ENCODE measurements at regions of chrX and their contacts with region 1.

Region 1: GRCh38 chrX:65723706-65724105 is 56.3 kb downstream of the MSN start:
- DNase-seq: peak; percentile 74
- ATAC-seq: peak; percentile 80
- H3K4me3 ChIP-seq: no peak overlapping the region
- H3K27ac ChIP-seq: peak overlapping the region; percentile 78
- H3K4me1 ChIP-seq: peaks cover 13% of the 10 kb centered on the region
- H3K27me3 ChIP-seq: no peaks in the 10 kb centered on the region
- CTCF ChIP-seq: no peak
- EP300 ChIP-seq: peak in 1 of 2 experiments; percentile 70; a peak in 2 of 4 replicates
- POLR2A ChIP-seq: no peak
- RAD21 ChIP-seq: no peak

Region 2: GRCh38 chrX:65667503-65668376 is 56.0 kb before region 1 on chrX and contains the start of gene MSN:
- CTCF ChIA-PET with region 1: interaction called, 6 read pairs
- POLR2A ChIA-PET with region 1: interaction called, 4 read pairs
- RAD21 ChIA-PET with region 1: interaction called, 34 read pairs
- SMC1A ChIA-PET with region 1: interaction called, 7 read pairs
- in situ Hi-C with region 1: no loop called
- intact Hi-C with region 1: loop called (anchors 2 kb)
- DNase-seq: no peak
- ATAC-seq: peak; percentile 84
- H3K4me3 ChIP-seq: peak within 1 kb of the TSS; percentile 90
- H3K27ac ChIP-seq: peak within 1 kb of the TSS; percentile 83
- H3K4me1 ChIP-seq: peaks cover 4% of the 10 kb centered on the region; the same call in 1 of the 2 replicates
- H3K27me3 ChIP-seq: no peaks in the 10 kb centered on the region
- CTCF ChIP-seq: peak; percentile 5 to 14 (median 14); a peak in 1 of 6 replicates
- EP300 ChIP-seq: no peak
- POLR2A ChIP-seq: peak; percentile 85
- RAD21 ChIP-seq: no peak
- polyA plus RNA-seq, gene MSN: 93.8 to 104 TPM

Region 3: DNA sequence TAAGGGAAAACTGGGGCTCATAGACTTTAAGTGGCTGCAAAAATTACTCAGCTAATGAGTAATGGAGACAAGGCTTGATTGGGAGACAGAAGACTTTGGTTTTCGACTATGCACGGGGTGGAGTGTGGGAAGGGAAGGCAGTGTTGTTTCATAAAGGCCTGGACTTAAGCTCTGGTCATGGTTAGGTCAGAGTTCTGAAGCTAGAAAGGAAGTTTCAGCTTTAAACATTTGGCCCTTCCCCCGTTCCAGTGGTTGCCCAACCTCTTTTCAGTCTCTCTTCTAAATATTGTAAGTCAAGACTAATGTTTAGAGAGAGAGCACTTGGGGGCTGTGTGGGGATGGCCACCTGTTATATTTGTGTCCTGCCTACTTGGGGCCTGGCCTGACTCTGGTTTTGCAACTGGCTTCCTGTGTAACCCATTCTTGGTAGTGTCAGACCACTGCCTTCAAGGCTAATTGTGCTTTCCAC is 35.3 kb before region 1 on chrX:
- CTCF ChIA-PET with region 1: interaction called, 10 read pairs
- POLR2A ChIA-PET with region 1: interaction called, 7 read pairs
- RAD21 ChIA-PET with region 1: interaction called, 119 read pairs
- SMC1A ChIA-PET with region 1: interaction called, 38 read pairs
- in situ Hi-C with region 1: no loop called
- intact Hi-C with region 1: no loop called
- DNase-seq: peak; percentile 74
- ATAC-seq: peak; percentile 88
- H3K4me3 ChIP-seq: no peak overlapping the region
- H3K27ac ChIP-seq: peak overlapping the region; percentile 77
- H3K4me1 ChIP-seq: peaks cover 53% of the 10 kb centered on the region
- H3K27me3 ChIP-seq: no peaks in the 10 kb centered on the region
- CTCF ChIP-seq: no peak
- EP300 ChIP-seq: no peak
- POLR2A ChIP-seq: no peak
- RAD21 ChIP-seq: peak; percentile 20; the same call in 1 of the 2 replicates

Region 4: GRCh38 chrX:65697915-65698796 is 25.6 kb before region 1 on chrX:
- CTCF ChIA-PET with region 1: interaction called, 25 read pairs
- POLR2A ChIA-PET with region 1: interaction called, 20 read pairs
- RAD21 ChIA-PET with region 1: interaction called, 119 read pairs
- SMC1A ChIA-PET with region 1: interaction called, 65 read pairs
- in situ Hi-C with region 1: no loop called
- intact Hi-C with region 1: loop called (anchors 1 kb)
- DNase-seq: peak; percentile 83
- ATAC-seq: peak; percentile 72
- H3K4me3 ChIP-seq: peak overlapping the region; percentile 10; the same call in 1 of the 2 replicates
- H3K27ac ChIP-seq: peak overlapping the region; percentile 87
- H3K4me1 ChIP-seq: peaks cover 59% of the 10 kb centered on the region
- H3K27me3 ChIP-seq: no peaks in the 10 kb centered on the region
- CTCF ChIP-seq: no peak
- EP300 ChIP-seq: peak; percentile 12 to 54; a peak in 1 of 4 replicates
- POLR2A ChIP-seq: peak; percentile 55; the same call in 1 of the 2 replicates
- RAD21 ChIP-seq: no peak

Region 5: DNA sequence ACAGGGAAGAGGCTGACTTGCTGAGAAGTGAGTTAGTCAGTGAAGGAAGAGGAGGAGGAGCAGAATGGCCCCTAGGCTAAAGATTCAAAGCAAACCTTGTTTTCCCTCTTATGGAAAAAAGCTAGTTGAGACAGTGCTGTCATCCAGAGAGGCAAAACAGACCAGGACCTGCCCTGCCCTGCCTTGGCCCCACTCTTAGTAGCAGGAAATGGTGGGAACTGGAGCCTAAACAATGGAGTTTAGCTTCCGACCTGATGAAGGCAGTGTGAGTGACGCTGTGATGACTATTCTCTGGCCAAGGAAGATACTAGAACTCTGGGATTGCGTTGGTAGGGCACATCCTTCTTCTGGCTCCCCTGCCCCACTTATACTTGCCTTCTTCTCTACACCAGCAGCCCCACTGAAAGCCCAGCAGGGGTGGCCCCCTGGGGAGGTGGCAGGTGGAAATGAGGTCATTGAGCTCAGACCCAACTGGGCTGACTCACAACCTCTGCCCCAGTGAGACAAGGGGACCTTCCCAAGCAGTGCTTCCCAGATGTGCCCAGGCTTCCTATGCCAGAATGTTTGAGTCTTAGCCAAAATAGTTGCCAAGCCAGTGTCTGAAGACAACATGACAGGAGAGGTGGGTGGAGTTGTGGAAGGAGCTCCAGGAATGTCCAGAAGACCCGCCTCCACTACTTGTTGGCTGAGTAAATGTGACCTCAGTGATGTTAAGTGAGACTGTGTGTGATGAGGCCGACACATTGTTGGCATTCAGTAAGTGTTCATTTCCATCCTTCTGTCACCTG is 17.5 kb before region 1 on chrX:
- CTCF ChIA-PET with region 1: interaction called, 7 read pairs
- POLR2A ChIA-PET with region 1: interaction called, 26 read pairs
- RAD21 ChIA-PET with region 1: interaction called, 119 read pairs
- SMC1A ChIA-PET with region 1: interaction called, 65 read pairs
- in situ Hi-C with region 1: no loop called
- intact Hi-C with region 1: no loop called
- DNase-seq: no peak
- ATAC-seq: peak; percentile 77
- H3K4me3 ChIP-seq: no peak overlapping the region
- H3K27ac ChIP-seq: peak overlapping the region; percentile 29
- H3K4me1 ChIP-seq: peaks cover 33% of the 10 kb centered on the region
- H3K27me3 ChIP-seq: no peaks in the 10 kb centered on the region
- CTCF ChIP-seq: no peak
- EP300 ChIP-seq: no peak
- POLR2A ChIP-seq: peak; percentile 34; the same call in 1 of the 2 replicates
- RAD21 ChIP-seq: no peak

Region 6: GRCh38 chrX:65750674-65751469 is 27.2 kb after region 1 on chrX:
- CTCF ChIA-PET with region 1: no interaction called
- POLR2A ChIA-PET with region 1: interaction called, 3 read pairs
- RAD21 ChIA-PET with region 1: interaction called, 14 read pairs
- SMC1A ChIA-PET with region 1: interaction called, 7 read pairs
- in situ Hi-C with region 1: no loop called
- intact Hi-C with region 1: no loop called
- DNase-seq: peak; percentile 65
- ATAC-seq: peak; percentile 85
- H3K4me3 ChIP-seq: no peak overlapping the region
- H3K27ac ChIP-seq: no peak overlapping the region
- H3K4me1 ChIP-seq: peaks cover 7% of the 10 kb centered on the region
- H3K27me3 ChIP-seq: no peaks in the 10 kb centered on the region
- CTCF ChIP-seq: no peak
- EP300 ChIP-seq: no peak
- POLR2A ChIP-seq: no peak
- RAD21 ChIP-seq: no peak